Left ventricle myocardium superior (tissue), 1 donor: ENCODE measurements at regions of chr16 and their contacts with region 1.

Region 1: DNA sequence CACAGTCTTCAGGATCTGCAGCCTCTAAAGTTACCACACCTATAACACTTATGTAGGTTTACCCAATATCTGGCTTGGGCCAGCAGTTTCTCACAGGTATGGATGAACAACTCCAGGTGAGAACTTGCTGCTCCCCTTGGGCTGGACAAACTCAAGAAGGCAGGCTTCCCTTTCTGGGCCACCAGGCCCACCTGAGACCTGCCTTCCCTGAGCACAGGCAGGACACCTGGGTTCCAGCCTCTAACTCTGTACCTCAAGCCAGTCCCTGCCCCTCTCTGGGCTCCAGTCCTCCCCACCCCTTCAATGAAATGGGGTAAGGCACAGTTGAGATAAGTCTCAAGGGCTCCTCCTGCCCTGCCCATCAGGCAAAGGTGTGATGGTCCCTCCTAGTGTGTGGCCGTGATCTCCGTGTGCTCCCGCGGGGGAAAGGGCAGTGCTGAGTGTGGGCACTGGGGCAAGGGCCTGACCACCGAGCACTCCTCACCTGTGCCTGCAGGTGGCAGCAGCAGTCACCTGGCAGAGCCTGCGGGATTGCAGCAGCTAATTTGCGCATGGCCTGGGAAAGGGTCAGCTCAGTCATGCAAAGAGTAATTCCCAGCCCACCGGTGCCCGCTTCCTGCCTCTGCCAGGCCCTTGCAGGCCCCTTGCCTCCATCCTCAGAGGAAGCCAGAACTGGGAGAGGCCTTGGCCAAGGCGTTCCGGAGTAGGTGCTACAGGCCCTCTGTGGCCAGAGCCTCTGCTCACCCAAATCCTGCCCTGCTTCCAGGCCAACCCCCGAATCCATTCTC is 28.2 kb upstream of the ADGRG1 start:
- DNase-seq: peak; percentile 53
- ATAC-seq: peak; percentile 82

Region 2: DNA sequence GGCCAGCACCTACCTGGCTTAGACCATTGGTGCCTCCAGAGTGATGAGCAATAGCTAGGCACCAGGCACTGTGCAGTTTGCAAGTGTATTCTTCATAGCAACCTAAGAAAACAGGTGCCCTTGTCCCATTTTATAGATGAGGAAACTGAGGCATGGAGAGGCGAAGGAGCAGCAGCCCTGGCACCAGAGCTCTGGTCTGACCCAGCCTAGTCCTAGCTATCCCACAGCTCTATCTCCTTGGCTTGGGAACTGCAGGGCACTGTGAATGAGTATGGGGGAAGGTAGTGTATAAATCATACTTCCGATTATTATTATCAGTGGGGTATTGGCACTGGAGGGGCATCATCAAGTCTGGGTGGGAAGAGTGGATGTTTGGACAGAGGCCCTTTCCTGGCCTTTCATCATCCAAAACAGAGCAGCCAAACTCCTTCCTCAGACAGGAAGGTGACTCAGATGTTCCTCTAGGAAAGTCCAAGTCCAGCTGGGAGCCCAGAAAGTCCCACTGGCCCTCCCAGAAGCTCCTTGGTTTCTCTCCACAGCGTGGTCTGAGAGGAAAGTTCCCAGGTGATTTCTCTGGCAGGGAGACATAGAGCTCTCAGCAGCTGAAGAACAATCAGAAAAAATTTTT is 283.7 kb before region 1 on chr16:
- intact Hi-C with region 1: no loop called
- DNase-seq: no peak
- ATAC-seq: peak; percentile 81

Region 3: GRCh38 chr16:57648590-57649442 is 48.6 kb after region 1 on chr16:
- intact Hi-C with region 1: loop called (anchors 5 kb)
- DNase-seq: peak; percentile 82
- ATAC-seq: peak; percentile 64